ENCODE measurements at regions of chr2 and their contacts with region 1.

Region 1: DNA sequence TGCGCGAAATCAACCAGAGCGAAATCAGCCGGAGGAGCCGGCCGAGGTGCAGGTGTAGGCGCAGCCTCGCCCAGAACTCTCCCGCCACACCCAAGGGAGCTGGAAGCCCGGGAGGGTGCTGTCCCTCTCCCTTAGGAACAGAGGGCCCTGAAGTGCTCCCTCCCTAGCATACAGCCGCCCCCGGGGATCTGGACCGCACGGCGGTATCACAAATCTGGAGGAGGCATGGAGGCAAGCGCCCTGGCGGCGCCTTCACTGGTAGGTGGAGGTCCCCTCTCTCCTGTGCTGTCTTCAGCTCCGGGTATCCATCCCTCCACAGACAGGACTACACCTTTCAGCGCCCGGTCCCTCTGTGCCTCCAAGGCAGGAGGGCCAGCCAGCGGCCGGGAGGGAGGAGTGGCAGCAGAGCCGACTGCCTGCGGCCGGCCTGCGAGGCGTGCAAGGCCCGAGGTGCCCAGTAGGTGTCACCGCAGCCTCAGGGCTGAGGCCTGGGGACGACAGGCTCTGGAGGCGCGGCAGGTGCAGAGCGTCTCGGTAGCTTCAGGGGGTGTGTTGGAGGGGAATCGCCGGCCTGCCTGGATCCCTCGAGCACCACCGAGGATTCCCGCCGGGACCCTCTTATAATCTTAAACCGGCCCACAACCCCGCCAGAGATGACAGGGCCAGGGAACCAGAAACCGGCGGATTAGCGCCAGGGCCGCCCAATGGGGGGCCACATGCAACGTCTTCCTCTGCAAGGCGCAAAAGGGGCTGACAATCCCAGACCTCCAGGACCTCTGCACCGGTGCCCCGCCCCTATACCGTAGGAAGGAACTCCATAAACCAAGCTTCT is 2.8 kb downstream of the IHH start:
- DNase-seq: peak; percentile 83
- H3K4me3 ChIP-seq: peak overlapping the region; percentile 59
- H3K27ac ChIP-seq: no peak overlapping the region
- H3K4me1 ChIP-seq: no peaks in the 10 kb centered on the region
- H3K27me3 ChIP-seq: peaks cover 33% of the 10 kb centered on the region
- CTCF ChIP-seq: peak; percentile 93

Region 2: DNA sequence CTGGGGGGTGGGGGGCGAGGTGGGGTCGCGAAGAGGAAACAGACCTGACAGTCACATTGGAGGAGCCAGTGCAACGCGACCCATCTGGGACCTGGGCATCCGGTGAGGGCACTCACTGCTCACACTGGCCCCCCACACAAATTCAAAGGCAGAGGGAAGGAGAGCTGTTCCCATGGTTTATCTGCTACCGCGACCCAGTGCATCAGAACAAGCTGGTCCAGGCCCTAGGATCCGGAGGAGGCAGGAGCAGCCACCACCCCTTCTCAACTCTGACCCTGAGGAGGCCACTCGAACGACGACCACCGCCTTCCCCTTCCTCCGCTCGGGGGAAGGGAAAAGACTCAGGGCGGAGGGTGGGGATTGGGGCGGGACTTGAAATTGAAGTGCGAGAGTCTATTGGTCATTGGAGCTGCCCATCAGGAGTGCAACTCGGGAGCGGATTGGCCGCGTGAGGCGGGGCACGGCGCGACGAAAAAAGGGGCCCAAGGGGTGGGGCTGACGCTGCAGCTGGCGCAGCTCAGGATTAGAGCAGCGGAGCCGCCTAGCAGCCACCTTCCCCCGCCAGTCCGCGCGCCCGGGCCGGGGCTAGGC is 98.7 kb before region 1 on chr2 and contains the start of gene CDK5R2:
- intact Hi-C with region 1: no loop called
- DNase-seq: peak; percentile 88
- H3K4me3 ChIP-seq: peak within 1 kb of the TSS; percentile 37
- H3K27ac ChIP-seq: no peak within 1 kb of the TSS
- H3K4me1 ChIP-seq: no peaks in the 10 kb centered on the region
- H3K27me3 ChIP-seq: peaks cover 58% of the 10 kb centered on the region
- CTCF ChIP-seq: no peak
- total RNA-seq, gene CDK5R2: 0.30 to 0.56 TPM

Region 3: GRCh38 chr2:219119422-219120043 is 61.6 kb after region 1 on chr2:
- intact Hi-C with region 1: loop called (anchors 5 kb)
- DNase-seq: peak; percentile 90
- H3K4me3 ChIP-seq: no peak overlapping the region
- H3K27ac ChIP-seq: no peak overlapping the region
- H3K4me1 ChIP-seq: peaks cover 18% of the 10 kb centered on the region
- H3K27me3 ChIP-seq: no peaks in the 10 kb centered on the region
- CTCF ChIP-seq: peak; percentile 68

Region 4: GRCh38 chr2:219155054-219155644 is 97.2 kb after region 1 on chr2:
- intact Hi-C with region 1: loop called (anchors 5 kb)
- DNase-seq: peak; percentile 53
- H3K4me3 ChIP-seq: no peak overlapping the region
- H3K27ac ChIP-seq: no peak overlapping the region
- H3K4me1 ChIP-seq: no peaks in the 10 kb centered on the region
- H3K27me3 ChIP-seq: no peaks in the 10 kb centered on the region
- CTCF ChIP-seq: peak; percentile 50

Region 5: GRCh38 chr2:219294356-219295351 is 236.7 kb after region 1 on chr2:
- intact Hi-C with region 1: loop called (anchors 5 kb)
- DNase-seq: peak; percentile 91
- H3K4me3 ChIP-seq: peak overlapping the region; percentile 53
- H3K27ac ChIP-seq: peak overlapping the region; percentile 51
- H3K4me1 ChIP-seq: no peaks in the 10 kb centered on the region
- H3K27me3 ChIP-seq: no peaks in the 10 kb centered on the region
- CTCF ChIP-seq: peak; percentile 99